ENCODE measurements at regions of chr1 and their contacts with region 1.

Region 1: DNA sequence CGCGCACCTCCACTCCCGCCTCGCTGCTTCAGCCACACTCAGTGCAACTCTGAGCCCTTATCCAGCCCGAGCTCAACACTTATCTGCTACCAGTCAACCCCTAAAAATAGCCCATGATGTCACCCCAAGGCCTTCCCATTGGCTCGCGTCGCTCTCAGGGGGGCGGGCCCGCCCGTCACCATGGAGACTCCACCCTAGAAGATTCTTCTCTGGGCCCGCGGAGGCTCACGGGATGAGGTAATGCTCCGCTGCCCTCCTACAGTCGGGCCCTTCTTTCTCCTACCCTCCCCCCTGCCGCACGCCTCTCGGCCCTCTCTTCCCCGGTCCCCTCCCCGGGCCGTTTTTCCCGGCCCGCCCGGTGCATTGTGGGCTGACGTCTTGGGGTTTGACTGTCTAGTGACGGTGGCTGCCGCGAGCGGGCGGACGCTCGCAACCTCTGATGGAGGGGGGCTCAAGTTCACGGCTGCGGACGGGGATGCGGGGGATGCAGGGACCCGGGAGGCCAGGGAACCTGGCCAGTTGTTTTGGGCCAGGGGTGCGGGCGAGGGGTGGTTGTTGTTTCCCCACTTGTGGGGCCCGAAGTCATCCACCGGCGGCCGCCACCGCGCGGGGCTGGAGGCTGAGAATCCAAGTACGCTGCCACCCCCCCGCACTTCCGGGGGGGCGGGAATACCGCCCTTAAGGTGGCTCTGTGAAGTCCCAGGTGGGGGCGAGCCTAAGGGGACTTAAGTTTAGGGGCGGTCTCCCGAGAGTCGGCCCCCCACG is at the start of gene JUN:
- DNase-seq: peak; percentile 100
- ATAC-seq: peak; percentile 83
- H3K4me3 ChIP-seq: peak within 1 kb of the TSS; percentile 98
- H3K27ac ChIP-seq: peak within 1 kb of the TSS; percentile 91
- H3K4me1 ChIP-seq: peaks cover 8% of the 10 kb centered on the region
- H3K27me3 ChIP-seq: no peaks in the 10 kb centered on the region
- CTCF ChIP-seq: no peak
- POLR2A ChIP-seq: 0 out of 2 replicates have a peak, but pooled peaks have one; percentile 100
- RAD21 ChIP-seq: no peak; the same call in 1 of the 2 replicates
- total RNA-seq, gene JUN: 46.6 and 51.1 TPM in 2 replicates

Region 2: GRCh38 chr1:58727363-58727762 is 56.8 kb before region 1 on chr1:
- CTCF ChIA-PET with region 1: no interaction called
- POLR2A ChIA-PET with region 1: no interaction called
- dilution Hi-C with region 1: no loop called
- in situ Hi-C with region 1: no loop called
- intact Hi-C with region 1: no loop called
- DNase-seq: peak; percentile 89
- ATAC-seq: peak; percentile 87
- H3K4me3 ChIP-seq: no peak overlapping the region
- H3K27ac ChIP-seq: no peak overlapping the region
- H3K4me1 ChIP-seq: peaks cover 8% of the 10 kb centered on the region
- H3K27me3 ChIP-seq: no peaks in the 10 kb centered on the region
- CTCF ChIP-seq: no peak
- POLR2A ChIP-seq: no peak
- RAD21 ChIP-seq: no peak

Region 3: DNA sequence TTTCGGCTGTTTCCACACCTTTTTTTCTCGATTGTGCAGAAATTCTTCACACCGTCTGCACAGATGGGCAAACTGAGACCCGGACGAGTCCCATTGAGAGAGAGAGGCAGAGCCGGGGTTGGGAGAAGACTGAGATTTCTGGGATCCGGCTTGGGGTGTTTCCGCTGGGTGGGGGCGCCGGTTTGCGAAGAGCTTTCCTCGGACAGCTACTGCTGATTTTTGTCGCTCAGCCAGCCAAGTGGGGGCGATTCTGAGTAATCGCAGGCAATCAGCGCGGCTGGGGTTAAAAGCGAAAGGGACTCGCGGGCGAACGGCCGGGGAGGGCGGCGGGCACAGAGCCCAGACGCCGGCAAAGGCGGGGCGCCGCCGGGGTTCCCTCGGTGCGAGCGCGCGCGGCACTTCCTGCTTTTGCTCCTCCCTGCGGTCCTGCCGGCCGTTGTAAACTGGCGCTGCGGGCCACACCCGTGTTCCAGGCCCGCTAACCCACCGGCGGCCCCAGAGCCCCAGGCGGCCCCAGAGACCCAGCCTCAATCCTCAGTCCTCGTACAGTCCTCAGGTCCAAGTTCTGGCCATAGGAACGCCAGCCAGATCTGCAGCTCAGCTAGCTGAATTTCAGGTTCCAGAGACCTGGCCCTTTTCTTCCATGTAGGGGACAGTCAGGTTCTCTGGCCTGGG is 32.0 kb after region 1 on chr1:
- CTCF ChIA-PET with region 1: no interaction called
- POLR2A ChIA-PET with region 1: no interaction called
- dilution Hi-C with region 1: no loop called
- in situ Hi-C with region 1: no loop called
- intact Hi-C with region 1: loop called (anchors 1 kb)
- DNase-seq: peak; percentile 89
- ATAC-seq: peak; percentile 69
- H3K4me3 ChIP-seq: peak overlapping the region; percentile 49
- H3K27ac ChIP-seq: peak overlapping the region; percentile 97
- H3K4me1 ChIP-seq: peaks cover 16% of the 10 kb centered on the region
- H3K27me3 ChIP-seq: no peaks in the 10 kb centered on the region
- CTCF ChIP-seq: 0 out of 2 replicates have a peak, but pooled peaks have one; percentile 10
- POLR2A ChIP-seq: no peak
- RAD21 ChIP-seq: no peak; the same call in 1 of the 2 replicates

Region 4: GRCh38 chr1:59076612-59077011 is 292.4 kb after region 1 on chr1:
- CTCF ChIA-PET with region 1: no interaction called
- POLR2A ChIA-PET with region 1: no interaction called
- dilution Hi-C with region 1: no loop called
- in situ Hi-C with region 1: no loop called
- intact Hi-C with region 1: loop called (anchors 5 kb)
- DNase-seq: peak; percentile 34
- ATAC-seq: peak; percentile 76
- H3K4me3 ChIP-seq: no peak overlapping the region
- H3K27ac ChIP-seq: no peak overlapping the region
- H3K4me1 ChIP-seq: peaks cover 4% of the 10 kb centered on the region
- H3K27me3 ChIP-seq: no peaks in the 10 kb centered on the region
- CTCF ChIP-seq: peak; percentile 41; the same call in 1 of the 2 replicates
- POLR2A ChIP-seq: no peak
- RAD21 ChIP-seq: peak; percentile 47

Region 5: GRCh38 chr1:59367301-59368007 is 583.3 kb after region 1 on chr1:
- CTCF ChIA-PET with region 1: no interaction called
- POLR2A ChIA-PET with region 1: no interaction called
- dilution Hi-C with region 1: no loop called
- in situ Hi-C with region 1: no loop called
- intact Hi-C with region 1: loop called (anchors 5 kb)
- DNase-seq: peak; percentile 94
- ATAC-seq: peak; percentile 96
- H3K4me3 ChIP-seq: no peak overlapping the region
- H3K27ac ChIP-seq: peak overlapping the region; percentile 81
- H3K4me1 ChIP-seq: peaks cover 14% of the 10 kb centered on the region
- H3K27me3 ChIP-seq: no peaks in the 10 kb centered on the region
- CTCF ChIP-seq: no peak
- POLR2A ChIP-seq: no peak
- RAD21 ChIP-seq: no peak; the same call in 1 of the 2 replicates

Region 6: DNA sequence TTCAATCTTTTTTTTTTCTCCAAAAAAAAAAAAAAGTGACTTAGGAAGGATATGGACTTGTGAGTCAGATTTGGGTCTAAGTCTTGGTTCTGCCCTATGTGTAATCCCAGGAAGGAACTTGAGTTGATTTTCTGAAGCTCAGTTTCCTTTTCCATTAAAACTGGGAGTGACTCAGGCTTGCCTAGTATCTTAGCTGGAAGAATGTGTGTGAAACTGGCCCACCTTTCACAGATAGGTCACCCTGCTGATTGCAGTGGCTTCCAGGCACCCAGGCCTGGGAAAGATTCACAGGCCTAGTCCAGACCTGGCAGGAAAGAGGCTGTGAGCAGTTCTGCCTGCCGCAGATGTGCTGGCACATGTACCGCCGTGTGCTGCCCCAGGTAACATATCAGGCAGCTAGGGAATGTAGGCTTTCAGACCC is 812.3 kb after region 1 on chr1:
- CTCF ChIA-PET with region 1: no interaction called
- POLR2A ChIA-PET with region 1: no interaction called
- dilution Hi-C with region 1: no loop called
- in situ Hi-C with region 1: no loop called
- intact Hi-C with region 1: loop called (anchors 5 kb)
- DNase-seq: peak; percentile 95
- ATAC-seq: peak; percentile 52
- H3K4me3 ChIP-seq: no peak overlapping the region
- H3K27ac ChIP-seq: peak overlapping the region; percentile 96
- H3K4me1 ChIP-seq: peaks cover 19% of the 10 kb centered on the region
- H3K27me3 ChIP-seq: no peaks in the 10 kb centered on the region
- CTCF ChIP-seq: no peak
- POLR2A ChIP-seq: no peak
- RAD21 ChIP-seq: peak; percentile 6; the same call in 1 of the 2 replicates

Region 7: DNA sequence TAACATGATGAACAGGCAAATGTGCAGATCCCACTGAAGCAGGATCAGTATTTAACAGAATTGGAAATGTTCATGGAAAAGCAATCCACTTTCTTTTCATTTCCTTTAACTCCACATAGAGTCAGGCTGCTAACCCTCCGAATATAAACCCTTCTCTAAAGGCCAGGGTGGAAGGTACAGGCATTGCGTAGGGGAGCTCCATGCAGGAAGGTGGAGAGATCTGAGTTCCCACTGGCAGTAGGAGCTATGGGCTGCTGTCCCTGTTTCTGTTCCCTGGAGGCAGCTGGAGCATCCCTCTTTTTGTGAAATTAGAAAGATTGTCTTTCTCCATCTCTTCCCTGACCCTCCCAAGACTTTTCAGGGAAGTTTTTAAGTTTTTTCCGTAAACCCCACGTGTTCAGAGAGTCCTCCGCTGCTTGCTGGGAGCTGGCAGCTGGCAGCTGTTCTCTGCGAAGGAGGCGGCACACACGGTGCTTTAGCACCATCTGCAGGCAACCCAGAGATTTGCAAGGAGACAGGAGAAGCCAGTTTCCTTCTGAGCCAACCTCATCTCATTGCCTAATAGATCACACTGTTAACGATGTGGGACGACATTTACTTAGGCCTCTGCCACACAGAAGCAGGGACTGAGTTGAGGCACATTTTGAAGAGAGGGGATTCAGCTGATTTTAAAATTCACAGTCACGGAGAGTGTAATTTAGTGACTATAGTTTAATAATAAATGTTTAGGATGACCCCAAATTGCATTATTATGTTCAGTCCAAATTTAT is 975.2 kb after region 1 on chr1:
- CTCF ChIA-PET with region 1: interaction called, 3 read pairs
- POLR2A ChIA-PET with region 1: no interaction called
- dilution Hi-C with region 1: no loop called
- in situ Hi-C with region 1: loop called (anchors 5 kb)
- intact Hi-C with region 1: loop called (anchors 1 kb)
- DNase-seq: peak; percentile 83
- ATAC-seq: peak; percentile 97
- H3K4me3 ChIP-seq: no peak overlapping the region
- H3K27ac ChIP-seq: peak overlapping the region; percentile 60
- H3K4me1 ChIP-seq: peaks cover 2% of the 10 kb centered on the region; the same call in 1 of the 2 replicates
- H3K27me3 ChIP-seq: no peaks in the 10 kb centered on the region; the same call in 1 of the 2 replicates
- CTCF ChIP-seq: peak; percentile 98
- POLR2A ChIP-seq: peak; percentile 79
- RAD21 ChIP-seq: peak; percentile 100

Measured in IMR-90 (cell line).